Naive thymus-derived CD4-positive, alpha-beta T cell (primary cell): ENCODE measurements at regions of chr6 and their contacts with region 1.

Region 1: GRCh38 chr6:38713812-38714211 is 1.3 kb upstream of the DNAH8 start:
- DNase-seq: peak in 2 of 9 donors; percentile 7 to 65
- ATAC-seq: peak; percentile 81
- H3K4me3 ChIP-seq: no peak overlapping the region
- H3K4me3 Mint-ChIP-seq: peak overlapping the region in 2 of 10 donors; percentile 67 to 83
- H3K27ac ChIP-seq: no peak overlapping the region
- H3K27ac Mint-ChIP-seq: peak overlapping the region in 1 of 9 donors; percentile 96
- H3K4me1 ChIP-seq: peaks cover 5 to 14% of the 10 kb centered on the region in 2 donors
- H3K4me1 Mint-ChIP-seq: peaks cover 11 to 43% (median 20%) of the 10 kb centered on the region in 7 donors
- H3K27me3 ChIP-seq: peaks cover 0 to 6% of the 10 kb centered on the region in 2 donors
- H3K27me3 Mint-ChIP-seq: peaks cover 20 to 51% (median 33%) of the 10 kb centered on the region in 5 donors

Region 2: DNA sequence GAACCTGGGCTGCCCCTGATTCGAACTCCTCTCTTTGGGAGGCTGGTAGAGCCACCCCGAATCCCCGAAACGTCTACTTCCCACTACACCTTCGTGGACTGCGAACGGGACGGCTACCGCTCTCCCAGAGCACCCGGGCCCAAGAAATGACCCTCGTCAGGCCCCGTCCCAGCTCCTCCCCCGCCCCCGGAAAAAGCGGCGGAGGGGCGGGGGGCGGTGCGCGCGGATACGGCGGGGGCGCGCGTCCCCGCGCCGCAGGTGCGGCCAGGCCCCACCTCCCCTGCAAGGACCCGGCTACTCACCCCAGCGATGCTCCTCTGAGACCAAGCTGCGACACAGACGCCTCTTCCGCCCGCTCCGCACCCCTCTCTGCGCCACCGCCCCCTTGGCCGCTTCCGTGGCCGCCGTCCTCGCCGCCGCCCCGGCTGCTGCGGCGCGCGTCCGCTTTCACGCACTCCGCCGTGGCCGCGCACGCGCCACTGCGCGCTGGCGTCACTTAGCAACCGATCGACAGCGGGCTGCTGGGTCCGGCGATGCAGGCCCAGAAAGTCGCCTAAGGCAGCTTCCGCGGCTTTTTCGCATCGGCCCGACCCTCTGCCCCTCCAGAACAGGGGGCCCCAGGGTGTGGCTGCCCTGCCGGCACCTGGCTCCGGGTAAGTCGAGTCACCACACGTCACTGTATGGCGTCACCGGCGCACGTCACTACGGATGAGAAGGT is 74.2 kb before region 1 on chr6 and contains the start of gene BTBD9:
- CTCF ChIA-PET with region 1: no interaction called
- POLR2A ChIA-PET with region 1: no interaction called
- intact Hi-C with region 1: loop called in 1 of 2 experiments (anchors 1 kb)
- DNase-seq: peak; percentile 83 to 92 (median 90)
- ATAC-seq: peak; percentile 87
- H3K4me3 ChIP-seq: peak within 1 kb of the TSS; percentile 90
- H3K4me3 Mint-ChIP-seq: peak within 1 kb of the TSS; percentile 74 to 94 (median 90)
- H3K27ac ChIP-seq: peak within 1 kb of the TSS; percentile 94
- H3K27ac Mint-ChIP-seq: peak within 1 kb of the TSS; percentile 88 to 96 (median 91)
- H3K4me1 ChIP-seq: peaks cover 16 to 22% of the 10 kb centered on the region in 2 donors
- H3K4me1 Mint-ChIP-seq: peaks cover 40 to 65% (median 57%) of the 10 kb centered on the region in 7 donors
- H3K27me3 ChIP-seq: no peaks in the 10 kb centered on the region
- H3K27me3 Mint-ChIP-seq: no peaks in the 10 kb centered on the region
- total RNA-seq, gene BTBD9: 20.6 to 58.8 (median 43.6) TPM